Activated naive CD4-positive, alpha-beta T cell treated with anti-CD3 and anti-CD28 coated beads for 36 hours (primary cell): ENCODE measurements at regions of chr5 and their contacts with region 1.

Region 1: GRCh38 chr5:96079075-96079474 is 117.4 kb upstream of the ELL2 start:
- DNase-seq: peak; percentile 71
- H3K4me3 Mint-ChIP-seq: no peak overlapping the region
- H3K27ac Mint-ChIP-seq: peak overlapping the region; percentile 77
- H3K4me1 Mint-ChIP-seq: peaks cover 38% of the 10 kb centered on the region
- H3K27me3 Mint-ChIP-seq: peaks cover 9% of the 10 kb centered on the region

Region 2: DNA sequence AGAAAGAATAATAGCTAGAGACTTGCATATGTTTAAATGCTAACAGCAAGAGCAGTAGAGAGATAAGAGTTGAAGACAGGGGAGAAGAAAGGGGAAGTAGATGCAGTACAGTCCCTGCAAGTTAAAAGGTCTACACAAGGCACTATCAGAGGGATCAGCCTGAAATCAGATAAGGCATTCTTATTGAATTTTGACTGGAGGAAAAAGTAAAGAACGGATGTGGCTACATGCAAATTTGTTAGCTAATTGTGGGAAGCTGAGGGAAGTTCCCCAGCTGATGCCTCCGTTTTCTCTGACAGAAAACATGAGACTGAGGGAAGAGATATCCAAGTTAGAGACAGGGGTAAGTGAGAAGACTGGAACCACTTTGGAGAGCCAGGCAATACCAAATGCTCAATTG is 360.9 kb before region 1 on chr5:
- CTCF ChIA-PET with region 1: no interaction called
- intact Hi-C with region 1: loop called (anchors 5 kb)
- DNase-seq: peak; percentile 60
- H3K4me3 Mint-ChIP-seq: no peak overlapping the region
- H3K27ac Mint-ChIP-seq: no peak overlapping the region
- H3K4me1 Mint-ChIP-seq: peaks cover 22% of the 10 kb centered on the region
- H3K27me3 Mint-ChIP-seq: peaks cover 11% of the 10 kb centered on the region

Region 3: GRCh38 chr5:96113170-96113939 is 34.3 kb after region 1 on chr5:
- CTCF ChIA-PET with region 1: no interaction called
- intact Hi-C with region 1: loop called (anchors 1 kb)
- DNase-seq: peak; percentile 19
- H3K4me3 Mint-ChIP-seq: no peak overlapping the region
- H3K27ac Mint-ChIP-seq: peak overlapping the region; percentile 77
- H3K4me1 Mint-ChIP-seq: peaks cover 28% of the 10 kb centered on the region
- H3K27me3 Mint-ChIP-seq: peaks cover 4% of the 10 kb centered on the region

Region 4: DNA sequence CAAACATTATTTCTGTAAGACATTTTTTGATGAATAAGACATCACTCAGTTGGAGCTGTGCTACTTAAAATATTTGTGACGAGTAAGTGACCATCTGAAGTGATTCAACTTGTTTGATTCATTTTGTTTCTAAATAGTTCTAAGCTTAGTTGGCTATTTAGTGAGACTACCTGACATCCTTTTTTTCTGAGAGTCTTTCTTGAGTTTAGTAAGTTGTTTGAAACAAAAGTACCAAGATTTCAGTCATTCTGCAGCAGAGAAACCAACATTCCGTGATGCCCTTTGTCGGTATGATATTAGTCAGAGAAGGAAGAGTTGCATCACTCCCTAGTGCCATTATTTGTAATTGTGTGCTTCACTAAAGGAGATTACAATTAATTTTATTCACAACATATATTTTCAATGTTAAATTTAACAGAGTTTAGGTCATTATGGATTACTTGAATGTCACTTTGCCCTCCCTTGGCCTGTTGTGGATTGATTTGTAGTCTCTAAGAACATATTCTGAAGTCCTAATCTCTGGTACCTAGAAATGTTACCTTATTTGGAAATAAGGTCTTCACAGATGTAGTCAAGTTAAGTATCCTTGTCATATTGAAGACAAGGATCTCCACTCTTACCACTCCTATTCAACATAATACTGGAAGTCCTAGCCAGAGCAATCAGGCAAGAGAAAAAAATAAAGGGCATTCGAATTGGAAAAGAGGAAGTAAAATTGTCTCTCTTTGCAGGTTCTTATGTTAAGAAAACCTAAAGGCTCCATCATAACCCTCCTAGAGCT is 141.7 kb after region 1 on chr5:
- CTCF ChIA-PET with region 1: no interaction called
- intact Hi-C with region 1: loop called (anchors 1 kb)
- DNase-seq: peak; percentile 22
- H3K4me3 Mint-ChIP-seq: no peak overlapping the region
- H3K27ac Mint-ChIP-seq: no peak overlapping the region
- H3K4me1 Mint-ChIP-seq: peaks cover 11% of the 10 kb centered on the region
- H3K27me3 Mint-ChIP-seq: peaks cover 16% of the 10 kb centered on the region

Region 5: DNA sequence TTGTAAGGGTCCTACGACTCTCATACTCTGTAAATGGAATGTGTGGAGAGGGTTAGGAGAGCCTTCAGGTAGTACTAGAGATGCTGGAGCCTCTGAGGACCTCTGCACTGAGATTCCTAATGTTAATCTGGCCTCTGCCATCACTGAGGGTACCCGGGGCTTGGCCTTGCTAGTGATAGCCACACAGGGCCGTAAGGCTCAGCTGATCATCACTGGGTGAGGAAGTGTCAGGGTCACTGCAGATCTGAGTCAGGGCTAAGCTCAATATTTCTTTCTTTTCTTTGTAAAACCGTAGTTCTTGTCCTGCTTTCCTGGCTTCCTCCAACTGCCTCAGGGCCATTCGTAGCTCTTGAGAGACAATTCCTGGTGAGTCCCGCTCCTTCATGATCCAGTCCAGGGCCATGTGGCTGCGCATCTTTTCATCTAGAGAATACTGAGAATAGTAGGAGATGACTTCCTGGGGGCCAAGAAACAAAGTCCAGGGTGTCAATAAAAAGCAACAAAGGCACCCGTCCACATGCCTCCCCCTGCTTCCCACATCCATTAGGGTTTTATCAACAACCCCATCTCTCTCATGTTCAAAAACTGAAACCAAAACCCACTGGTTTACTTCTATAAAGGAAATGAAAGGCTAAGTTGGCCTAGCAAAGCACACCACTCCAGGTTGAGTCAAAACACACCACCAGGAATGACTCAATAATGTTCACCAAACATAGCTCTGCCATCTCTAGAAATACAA is 1015.7 kb after region 1 on chr5:
- CTCF ChIA-PET with region 1: no interaction called
- intact Hi-C with region 1: loop called (anchors 5 kb)
- DNase-seq: peak; percentile 68
- H3K4me3 Mint-ChIP-seq: no peak overlapping the region
- H3K27ac Mint-ChIP-seq: no peak overlapping the region
- H3K4me1 Mint-ChIP-seq: peaks cover 16% of the 10 kb centered on the region
- H3K27me3 Mint-ChIP-seq: peaks cover 6% of the 10 kb centered on the region